CD4-positive, alpha-beta T cell (primary cell): ENCODE measurements at regions of chr12 and their contacts with region 1.

Region 1: DNA sequence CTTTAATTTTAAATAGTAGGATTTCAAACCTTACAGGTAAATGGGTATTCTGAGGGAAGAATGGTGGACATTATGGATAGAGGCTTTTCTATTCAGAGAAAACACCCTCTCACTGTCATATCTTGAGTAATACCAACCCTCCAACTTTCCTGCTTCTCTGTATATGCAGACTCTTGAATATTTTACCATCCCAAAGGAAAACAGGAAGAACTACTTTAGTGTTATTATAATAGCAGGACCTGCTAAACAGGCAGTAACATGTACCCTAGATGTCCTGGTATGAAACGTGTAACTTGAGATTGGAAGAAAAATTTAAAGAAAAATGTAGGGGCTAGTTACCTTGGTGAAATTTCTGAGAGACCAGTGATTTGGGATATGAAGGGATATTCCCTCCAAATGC is 82.9 kb upstream of the TRHDE start:
- DNase-seq: no peak
- ATAC-seq: no peak
- H3K4me3 ChIP-seq: no peak overlapping the region
- H3K4me3 Mint-ChIP-seq: no peak overlapping the region
- H3K27ac ChIP-seq: no peak overlapping the region
- H3K27ac Mint-ChIP-seq: no peak overlapping the region
- H3K4me1 ChIP-seq: no peaks in the 10 kb centered on the region
- H3K4me1 Mint-ChIP-seq: no peaks in the 10 kb centered on the region
- H3K27me3 ChIP-seq: no peaks in the 10 kb centered on the region
- H3K27me3 Mint-ChIP-seq: no peaks in the 10 kb centered on the region
- CTCF ChIP-seq: no peak

Region 2: GRCh38 chr12:72133497-72134055 is 55.7 kb before region 1 on chr12:
- CTCF ChIA-PET with region 1: no interaction called
- POLR2A ChIA-PET with region 1: no interaction called
- intact Hi-C with region 1: loop called in 1 of 2 experiments (anchors 10 kb)
- DNase-seq: no peak
- ATAC-seq: no peak
- H3K4me3 ChIP-seq: no peak overlapping the region
- H3K4me3 Mint-ChIP-seq: no peak overlapping the region
- H3K27ac ChIP-seq: no peak overlapping the region
- H3K27ac Mint-ChIP-seq: no peak overlapping the region
- H3K4me1 ChIP-seq: no peaks in the 10 kb centered on the region
- H3K4me1 Mint-ChIP-seq: no peaks in the 10 kb centered on the region
- H3K27me3 ChIP-seq: no peaks in the 10 kb centered on the region
- H3K27me3 Mint-ChIP-seq: no peaks in the 10 kb centered on the region
- CTCF ChIP-seq: no peak

Region 3: DNA sequence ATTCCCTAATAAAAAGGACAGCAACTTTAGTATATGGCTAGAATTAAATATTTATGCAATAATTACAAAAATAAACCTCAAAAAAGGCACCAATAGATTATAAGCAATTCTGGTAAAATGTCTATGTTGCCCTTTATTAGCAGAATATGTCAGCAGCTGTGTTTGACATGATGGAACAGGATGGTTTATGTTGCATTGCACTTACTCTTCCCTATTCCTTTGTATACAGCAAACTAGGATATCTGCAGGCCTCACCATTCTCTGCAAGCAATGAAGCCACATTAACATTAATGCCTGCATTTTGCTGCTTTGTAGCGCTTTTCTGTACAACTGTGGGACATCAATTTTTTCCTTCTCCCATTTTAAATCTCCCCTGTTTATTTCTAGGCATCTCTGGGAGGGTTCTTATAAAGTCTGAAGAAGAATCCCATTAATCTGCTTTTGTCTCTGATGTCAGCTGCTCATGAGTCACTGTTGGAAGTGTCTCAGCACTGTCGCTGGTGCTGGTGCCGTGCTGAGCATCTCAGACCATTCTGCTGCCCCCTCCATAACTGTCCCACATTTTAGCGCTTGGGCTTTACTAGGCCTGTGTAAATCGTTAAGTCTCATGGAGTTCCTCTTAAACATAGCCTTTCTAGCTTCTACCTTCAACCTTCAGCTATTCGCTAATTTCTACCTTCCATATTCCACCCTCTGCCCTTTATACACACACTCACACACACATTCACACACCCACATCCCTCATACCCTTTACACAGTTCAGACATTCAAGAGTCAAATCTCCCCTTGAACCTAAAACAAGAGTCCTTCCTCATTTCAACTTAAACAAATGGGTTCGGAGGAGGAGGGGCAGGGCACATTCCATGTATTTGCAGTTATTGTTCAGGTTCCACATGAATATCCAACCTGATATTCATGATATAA is 18.5 kb after region 1 on chr12:
- CTCF ChIA-PET with region 1: no interaction called
- POLR2A ChIA-PET with region 1: no interaction called
- intact Hi-C with region 1: no loop called
- DNase-seq: no peak
- ATAC-seq: no peak
- H3K4me3 ChIP-seq: no peak overlapping the region
- H3K4me3 Mint-ChIP-seq: no peak overlapping the region
- H3K27ac ChIP-seq: no peak overlapping the region
- H3K27ac Mint-ChIP-seq: no peak overlapping the region
- H3K4me1 ChIP-seq: no peaks in the 10 kb centered on the region
- H3K4me1 Mint-ChIP-seq: no peaks in the 10 kb centered on the region
- H3K27me3 ChIP-seq: no peaks in the 10 kb centered on the region
- H3K27me3 Mint-ChIP-seq: no peaks in the 10 kb centered on the region
- CTCF ChIP-seq: no peak